ENCODE measurements at regions of chr1 and their contacts with region 1.

Region 1: DNA sequence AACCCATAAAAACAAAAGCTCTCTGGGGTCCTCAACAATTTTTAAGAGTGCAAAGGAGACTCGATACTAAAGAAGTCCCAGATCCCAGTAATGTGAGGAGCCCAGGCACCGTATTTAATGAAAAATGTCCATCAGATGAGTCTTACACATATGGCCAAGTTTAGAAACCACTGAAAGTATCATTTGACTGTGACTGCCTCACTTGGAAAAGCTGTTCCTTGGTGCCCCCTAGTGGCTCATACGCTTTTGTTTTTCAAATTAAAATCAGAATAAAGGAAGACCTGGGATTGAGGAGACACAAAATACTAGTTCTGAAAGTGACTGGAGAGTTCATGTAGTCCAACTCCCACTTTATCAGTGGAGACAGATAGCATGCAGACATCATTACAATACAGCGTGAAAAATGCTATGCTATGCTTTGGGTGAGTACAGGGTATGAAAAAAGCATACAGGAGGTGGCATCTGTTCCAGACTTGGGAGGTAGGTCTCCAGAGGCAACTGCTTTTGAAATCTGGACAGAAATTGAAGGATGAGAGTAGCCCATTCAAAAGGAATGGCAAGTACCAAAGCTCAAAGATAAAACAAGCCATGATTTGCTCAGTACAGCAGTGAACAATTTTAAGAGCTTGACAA is 33.8 kb downstream of the GDAP2 start:
- DNase-seq: peak; percentile 46 to 48
- ATAC-seq: peak; percentile 90 to 96
- H3K4me3 ChIP-seq: no peak overlapping the region
- H3K27ac ChIP-seq: peak overlapping the region; percentile 12 to 56 (median 46)
- H3K4me1 ChIP-seq: peaks cover 0 to 9% of the 10 kb centered on the region in 2 donors
- H3K27me3 ChIP-seq: no peaks in the 10 kb centered on the region
- CTCF ChIP-seq: peak; percentile 40 to 76 (median 64)
- POLR2A ChIP-seq: no peak

Region 2: DNA sequence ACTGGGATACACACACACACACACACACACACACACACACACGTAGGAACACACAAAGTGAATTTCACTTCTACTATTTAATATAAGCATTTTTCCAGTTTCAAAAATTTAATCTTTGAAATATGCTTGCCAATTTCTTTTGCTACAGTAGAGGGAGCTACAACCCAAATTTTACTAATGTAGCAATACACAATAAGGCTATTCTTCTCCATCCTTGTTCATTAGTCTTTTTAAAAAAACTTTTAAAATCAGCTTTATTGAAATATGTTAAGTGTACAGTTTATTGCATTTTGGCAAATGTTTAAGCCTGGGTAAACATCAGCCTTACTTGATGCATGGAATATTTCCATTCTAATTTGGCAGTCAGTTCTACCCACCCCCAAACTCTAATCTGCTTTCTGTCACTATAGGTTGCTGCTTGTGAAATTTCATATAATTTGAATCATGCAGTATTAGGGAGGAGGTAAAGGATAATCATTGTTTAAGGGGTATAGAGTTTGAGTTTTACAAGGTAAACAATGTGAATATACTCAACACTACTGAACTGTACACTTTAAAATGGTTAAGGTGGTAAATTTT is 382.8 kb before region 1 on chr1:
- in situ Hi-C with region 1: loop called in 1 of 4 experiments (anchors 25 kb)
- intact Hi-C with region 1: loop called (anchors 5 kb)
- DNase-seq: no peak
- ATAC-seq: no peak
- H3K4me3 ChIP-seq: no peak overlapping the region
- H3K27ac ChIP-seq: no peak overlapping the region
- H3K4me1 ChIP-seq: no peaks in the 10 kb centered on the region
- H3K27me3 ChIP-seq: no peaks in the 10 kb centered on the region
- CTCF ChIP-seq: peak in 4 of 5 experiments; percentile 37 to 54 (median 46)
- POLR2A ChIP-seq: no peak

Region 3: DNA sequence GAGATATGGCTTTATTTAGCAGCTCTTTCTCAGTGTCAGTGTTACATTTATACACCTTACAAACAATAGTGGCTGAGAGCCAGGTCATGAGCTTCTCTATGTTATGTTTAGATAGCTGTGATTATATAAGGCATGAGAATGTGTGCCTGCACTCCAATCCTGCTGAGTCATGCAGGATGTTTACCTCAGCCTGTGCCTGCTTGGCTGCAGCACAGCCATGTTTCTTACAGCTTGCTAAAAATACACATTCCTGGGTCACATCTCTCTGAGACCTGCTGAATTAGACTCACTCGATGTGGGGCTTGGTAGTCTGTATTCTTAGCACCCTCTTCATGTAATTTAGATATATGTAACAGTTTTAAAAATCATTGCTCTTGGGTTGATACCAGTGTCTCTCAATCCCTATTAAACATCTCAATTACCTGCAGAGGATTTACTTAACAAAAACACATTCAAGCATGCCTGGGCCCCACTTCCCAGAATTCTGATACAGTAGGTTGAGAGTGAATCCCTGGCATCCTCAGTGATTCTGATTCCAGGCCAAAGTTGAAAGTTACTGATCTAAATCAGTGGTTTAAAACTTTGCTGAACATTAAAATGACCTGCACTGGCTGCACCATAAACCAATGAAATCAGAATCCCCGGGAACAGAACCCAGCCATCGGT is 73.7 kb before region 1 on chr1:
- in situ Hi-C with region 1: no loop called
- intact Hi-C with region 1: loop called (anchors 5 kb)
- DNase-seq: peak; percentile 42 to 55
- ATAC-seq: peak; percentile 66 to 80
- H3K4me3 ChIP-seq: peak overlapping the region in 2 of 4 donors; percentile 6 to 20
- H3K27ac ChIP-seq: peak overlapping the region; percentile 85 to 90 (median 86)
- H3K4me1 ChIP-seq: peaks cover 26 to 28% of the 10 kb centered on the region in 2 donors
- H3K27me3 ChIP-seq: no peaks in the 10 kb centered on the region
- CTCF ChIP-seq: no peak
- POLR2A ChIP-seq: no peak

Region 4: DNA sequence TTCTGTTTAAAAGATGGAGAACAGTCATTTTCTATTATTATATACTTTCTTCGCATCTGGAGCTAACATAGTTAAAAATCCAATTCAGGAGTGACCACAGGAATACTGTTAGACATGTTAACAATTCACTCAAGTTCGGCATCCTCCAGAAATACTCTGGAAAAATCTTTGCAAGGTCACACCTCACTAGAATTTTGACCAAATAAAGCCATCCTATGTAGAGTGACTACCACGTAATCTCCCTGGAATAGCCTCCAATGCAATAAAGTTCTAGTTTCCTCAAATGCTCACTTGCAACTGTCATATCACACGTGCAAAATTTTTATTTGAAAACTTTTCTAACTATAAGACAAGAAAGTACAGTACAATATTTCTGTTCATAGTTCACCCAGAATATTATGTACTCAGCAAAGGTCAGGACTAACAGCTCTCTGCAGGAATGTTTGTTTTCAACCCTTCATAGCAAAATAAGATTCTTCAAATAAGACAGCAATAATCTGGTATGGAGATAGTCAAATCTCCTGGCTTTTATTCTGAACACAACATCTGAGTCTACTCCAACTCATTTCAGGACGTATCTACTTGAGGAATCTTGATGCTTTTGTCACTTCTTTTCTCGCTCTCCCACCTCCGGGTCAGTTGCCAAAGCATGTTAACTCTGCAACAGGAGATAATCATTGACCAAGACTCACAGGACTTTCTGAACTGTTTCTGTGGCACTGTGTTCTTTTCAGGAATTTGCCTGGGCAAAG is 48.7 kb before region 1 on chr1:
- in situ Hi-C with region 1: no loop called
- intact Hi-C with region 1: no loop called
- DNase-seq: no peak
- ATAC-seq: no peak
- H3K4me3 ChIP-seq: no peak overlapping the region
- H3K27ac ChIP-seq: no peak overlapping the region
- H3K4me1 ChIP-seq: no peaks in the 10 kb centered on the region
- H3K27me3 ChIP-seq: no peaks in the 10 kb centered on the region
- CTCF ChIP-seq: no peak
- POLR2A ChIP-seq: no peak

Region 5: GRCh38 chr1:117919376-117919775 is 23.8 kb after region 1 on chr1:
- in situ Hi-C with region 1: no loop called
- intact Hi-C with region 1: no loop called
- DNase-seq: no peak
- ATAC-seq: no peak
- H3K4me3 ChIP-seq: no peak overlapping the region
- H3K27ac ChIP-seq: no peak overlapping the region
- H3K4me1 ChIP-seq: no peaks in the 10 kb centered on the region
- H3K27me3 ChIP-seq: no peaks in the 10 kb centered on the region
- CTCF ChIP-seq: no peak
- POLR2A ChIP-seq: no peak

Measured in gastrocnemius medialis (tissue), 4 donors.